A549 (cell line): ENCODE measurements at regions of chr5 and their contacts with region 1.

Region 1: GRCh38 chr5:139293504-139294373 is at the start of gene MATR3:
- DNase-seq: peak; percentile 93 to 97
- ATAC-seq: peak; percentile 88 to 89
- H3K4me3 ChIP-seq: peak within 1 kb of the TSS; percentile 66
- H3K27ac ChIP-seq: peak within 1 kb of the TSS; percentile 97 to 98
- H3K4me1 ChIP-seq: peaks cover 34% of the 10 kb centered on the region
- CTCF ChIP-seq: no peak
- EP300 ChIP-seq: no peak
- POLR2A ChIP-seq: peak; percentile 92
- RAD21 ChIP-seq: peak in 1 of 2 experiments; percentile 2; a peak in 2 of 5 replicates
- polyA plus RNA-seq, gene MATR3: 157 and 178 TPM in 2 replicates

Region 2: GRCh38 chr5:139256820-139257219 is 36.9 kb before region 1 on chr5:
- CTCF ChIA-PET with region 1: no interaction called
- POLR2A ChIA-PET with region 1: no interaction called
- DNase-seq: no peak
- ATAC-seq: no peak
- H3K4me3 ChIP-seq: no peak overlapping the region
- H3K27ac ChIP-seq: no peak overlapping the region
- H3K4me1 ChIP-seq: no peaks in the 10 kb centered on the region
- CTCF ChIP-seq: no peak
- EP300 ChIP-seq: no peak
- POLR2A ChIP-seq: no peak
- RAD21 ChIP-seq: no peak

Region 3: DNA sequence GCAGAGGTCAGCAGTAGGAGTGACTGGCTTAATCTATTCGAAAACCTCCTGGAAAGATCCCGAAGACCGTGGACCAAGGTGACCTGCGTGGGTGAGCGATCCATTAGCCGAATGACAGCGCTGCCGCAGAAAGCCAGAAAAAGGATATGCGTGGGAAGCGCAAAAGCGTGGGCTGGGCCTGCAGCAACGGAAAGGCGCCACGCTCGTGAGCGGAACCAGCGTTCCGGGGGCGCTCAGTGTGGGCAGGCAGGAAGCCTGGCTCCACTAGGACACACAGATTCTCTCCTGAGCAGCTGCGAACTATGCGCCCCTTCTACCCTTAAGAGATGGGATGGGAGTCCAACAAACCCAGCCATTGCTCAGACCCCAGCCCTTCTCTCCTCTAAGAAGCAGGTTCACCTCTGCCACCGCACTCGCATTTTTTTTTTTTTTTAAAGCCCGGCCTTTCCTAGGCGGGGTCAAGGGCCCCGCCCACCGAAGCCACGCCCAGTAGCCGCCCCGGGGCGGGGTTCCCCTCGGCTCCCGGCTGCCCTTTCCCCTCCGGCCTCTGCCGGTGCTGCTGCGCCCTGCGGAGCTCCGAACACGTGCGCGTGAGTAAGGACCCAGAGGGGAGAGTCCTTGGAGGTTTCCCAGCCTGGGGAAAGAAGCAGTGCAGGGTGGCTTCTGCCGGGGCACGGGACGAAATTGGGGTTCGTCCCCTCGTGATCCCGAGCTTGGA is 20.0 kb before region 1 on chr5:
- CTCF ChIA-PET with region 1: interaction called, 4 read pairs
- POLR2A ChIA-PET with region 1: interaction called, 18 read pairs
- DNase-seq: peak; percentile 89 to 93
- ATAC-seq: peak; percentile 92 to 94
- H3K4me3 ChIP-seq: peak overlapping the region; percentile 80
- H3K27ac ChIP-seq: peak overlapping the region; percentile 94 to 97
- H3K4me1 ChIP-seq: peaks cover 62% of the 10 kb centered on the region
- CTCF ChIP-seq: no peak
- EP300 ChIP-seq: no peak
- POLR2A ChIP-seq: peak; percentile 92
- RAD21 ChIP-seq: no peak

Region 4: DNA sequence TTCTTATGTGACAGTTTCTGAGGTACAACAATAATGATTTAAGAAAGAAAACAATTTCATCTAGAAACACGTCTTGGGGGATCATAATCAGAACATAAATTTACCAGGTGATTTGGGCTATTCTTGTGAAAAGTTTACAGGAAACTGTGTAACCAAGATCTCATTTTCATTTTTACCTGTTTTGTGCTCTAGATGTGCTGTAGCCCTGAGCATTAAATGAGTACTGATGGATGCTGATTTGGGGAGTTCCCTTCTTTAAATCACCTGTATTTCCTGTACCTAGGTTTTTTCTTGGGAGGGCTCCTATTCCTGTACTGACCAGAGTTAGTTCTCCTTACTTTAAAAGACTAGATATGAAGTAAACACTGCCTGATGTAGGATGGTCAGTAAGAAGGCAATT is 12.5 kb after region 1 on chr5:
- CTCF ChIA-PET with region 1: interaction called, 17 read pairs
- POLR2A ChIA-PET with region 1: interaction called, 20 read pairs
- DNase-seq: no peak
- ATAC-seq: no peak
- H3K4me3 ChIP-seq: no peak overlapping the region
- H3K27ac ChIP-seq: no peak overlapping the region
- H3K4me1 ChIP-seq: peaks cover 84% of the 10 kb centered on the region
- CTCF ChIP-seq: no peak
- EP300 ChIP-seq: no peak
- POLR2A ChIP-seq: no peak
- RAD21 ChIP-seq: no peak

Region 5: DNA sequence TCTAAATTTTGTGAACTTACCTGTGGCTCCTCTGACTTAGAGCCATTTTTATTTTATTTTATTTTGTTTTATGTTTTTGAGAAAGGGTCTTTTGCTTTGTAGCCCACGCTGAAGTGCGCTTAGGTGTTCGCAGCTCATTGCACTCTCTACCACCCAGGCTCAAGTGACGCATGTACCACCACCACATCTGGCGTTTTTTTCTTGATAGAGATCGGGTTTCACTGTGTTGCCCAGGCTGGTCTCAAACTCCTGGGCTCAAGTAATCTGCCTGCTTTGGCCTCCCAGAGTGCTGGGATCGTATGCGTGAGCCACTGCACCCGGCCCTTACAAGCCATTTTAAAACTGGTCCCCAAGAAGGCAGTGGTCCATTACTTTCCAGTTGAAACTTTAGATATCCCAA is 18.3 kb after region 1 on chr5:
- CTCF ChIA-PET with region 1: interaction called, 17 read pairs
- POLR2A ChIA-PET with region 1: interaction called, 20 read pairs
- DNase-seq: no peak
- ATAC-seq: no peak
- H3K4me3 ChIP-seq: no peak overlapping the region
- H3K27ac ChIP-seq: no peak overlapping the region
- H3K4me1 ChIP-seq: peaks cover 55% of the 10 kb centered on the region
- CTCF ChIP-seq: no peak
- EP300 ChIP-seq: no peak
- POLR2A ChIP-seq: no peak
- RAD21 ChIP-seq: no peak